ENCODE measurements at regions of chr21 and their contacts with region 1.

Region 1: DNA sequence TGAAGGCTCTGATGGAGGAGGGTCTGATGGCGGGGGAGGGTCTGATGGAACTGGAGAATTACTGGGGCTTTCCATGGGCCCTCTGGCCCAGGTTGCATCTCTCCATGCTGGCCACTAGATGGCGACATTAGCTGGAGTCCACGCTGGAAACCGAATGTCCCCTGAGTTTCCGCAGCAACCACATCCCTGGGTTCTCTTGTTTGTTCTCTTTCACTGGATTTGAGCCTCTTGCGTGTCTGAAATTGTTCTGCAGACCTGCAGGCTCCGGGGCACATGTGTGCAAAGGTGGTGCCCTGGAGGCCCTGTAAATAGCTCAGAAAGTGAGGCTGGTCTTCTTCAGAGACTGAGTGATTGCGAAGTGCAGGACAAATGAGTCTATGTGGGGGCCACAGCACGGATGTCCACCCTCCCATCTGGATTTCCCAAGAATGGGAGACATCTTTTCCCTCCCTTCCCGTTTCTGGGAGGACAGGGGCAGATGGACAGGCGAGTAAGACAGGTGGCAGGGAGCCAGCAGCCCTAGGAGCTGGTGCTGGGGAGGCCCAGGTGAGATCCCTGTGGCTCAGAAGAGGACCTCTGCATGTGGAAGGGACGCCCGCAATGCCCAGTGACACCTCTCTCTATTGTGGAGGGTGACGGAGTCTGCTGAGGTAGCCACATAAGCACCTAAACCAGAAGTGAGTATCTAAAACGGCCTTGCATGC is 73.2 kb upstream of the ABCG1 start:
- DNase-seq: peak; percentile 75
- ATAC-seq: peak; percentile 89
- H3K4me3 Mint-ChIP-seq: no peak overlapping the region
- H3K27ac Mint-ChIP-seq: no peak overlapping the region
- H3K4me1 Mint-ChIP-seq: peaks cover 8% of the 10 kb centered on the region
- H3K27me3 Mint-ChIP-seq: no peaks in the 10 kb centered on the region
- CTCF ChIP-seq: peak; percentile 91

Region 2: GRCh38 chr21:41957991-41958766 is 187.5 kb before region 1 on chr21:
- CTCF ChIA-PET with region 1: no interaction called
- POLR2A ChIA-PET with region 1: no interaction called
- intact Hi-C with region 1: no loop called
- DNase-seq: no peak
- ATAC-seq: no peak
- H3K4me3 Mint-ChIP-seq: no peak overlapping the region
- H3K27ac Mint-ChIP-seq: no peak overlapping the region
- H3K4me1 Mint-ChIP-seq: peaks cover 11% of the 10 kb centered on the region
- H3K27me3 Mint-ChIP-seq: peaks cover 19% of the 10 kb centered on the region
- CTCF ChIP-seq: no peak

Region 3: GRCh38 chr21:42156690-42157577 is 11.2 kb after region 1 on chr21:
- CTCF ChIA-PET with region 1: interaction called, 17 read pairs
- POLR2A ChIA-PET with region 1: interaction called, 3 read pairs
- intact Hi-C with region 1: no loop called
- DNase-seq: no peak
- ATAC-seq: no peak
- H3K4me3 Mint-ChIP-seq: no peak overlapping the region
- H3K27ac Mint-ChIP-seq: no peak overlapping the region
- H3K4me1 Mint-ChIP-seq: peaks cover 22% of the 10 kb centered on the region
- H3K27me3 Mint-ChIP-seq: no peaks in the 10 kb centered on the region
- CTCF ChIP-seq: no peak

Region 4: DNA sequence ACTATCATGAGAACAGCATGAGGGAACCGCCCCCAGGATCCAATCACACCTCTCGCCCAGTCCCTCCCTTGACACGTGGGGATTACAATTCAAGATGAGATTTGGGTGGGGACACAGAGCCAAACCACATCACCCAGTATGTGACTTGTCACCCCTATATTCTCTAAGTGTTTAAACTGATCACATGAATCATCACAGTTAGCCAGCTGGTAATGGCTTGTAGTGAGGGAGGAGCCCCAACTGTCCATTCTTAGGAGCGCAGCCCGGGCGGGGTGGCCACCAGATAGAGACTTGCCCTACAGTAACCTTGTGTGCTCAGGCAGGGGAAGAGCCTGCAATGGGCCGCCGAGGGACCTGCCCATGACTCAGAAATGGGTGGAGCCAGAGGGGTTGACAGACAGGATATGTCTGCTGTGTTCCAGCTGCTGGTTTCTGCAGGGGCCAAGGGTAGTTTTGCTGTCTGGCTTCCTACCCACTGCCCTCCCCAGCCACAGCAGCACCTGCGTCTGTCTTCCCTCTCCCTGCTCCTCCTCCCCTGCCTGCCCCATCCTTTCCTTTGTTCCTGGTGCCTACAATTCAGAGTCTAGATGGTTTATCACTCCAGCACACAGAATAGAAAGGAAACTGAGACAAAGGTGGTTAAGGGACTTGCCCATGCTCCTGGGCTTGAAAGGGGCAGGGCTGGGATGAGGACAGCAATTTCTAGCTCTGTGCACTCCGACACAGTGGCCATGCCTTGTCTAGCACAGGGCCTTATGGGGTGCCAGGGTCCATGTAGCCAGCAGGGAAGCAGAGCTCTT is 82.4 kb after region 1 on chr21:
- CTCF ChIA-PET with region 1: interaction called, 16 read pairs
- POLR2A ChIA-PET with region 1: no interaction called
- intact Hi-C with region 1: no loop called
- DNase-seq: peak; percentile 97
- ATAC-seq: peak; percentile 97
- H3K4me3 Mint-ChIP-seq: peak overlapping the region; percentile 53
- H3K27ac Mint-ChIP-seq: peak overlapping the region; percentile 92
- H3K4me1 Mint-ChIP-seq: peaks cover 72% of the 10 kb centered on the region
- H3K27me3 Mint-ChIP-seq: no peaks in the 10 kb centered on the region
- CTCF ChIP-seq: no peak

Region 5: DNA sequence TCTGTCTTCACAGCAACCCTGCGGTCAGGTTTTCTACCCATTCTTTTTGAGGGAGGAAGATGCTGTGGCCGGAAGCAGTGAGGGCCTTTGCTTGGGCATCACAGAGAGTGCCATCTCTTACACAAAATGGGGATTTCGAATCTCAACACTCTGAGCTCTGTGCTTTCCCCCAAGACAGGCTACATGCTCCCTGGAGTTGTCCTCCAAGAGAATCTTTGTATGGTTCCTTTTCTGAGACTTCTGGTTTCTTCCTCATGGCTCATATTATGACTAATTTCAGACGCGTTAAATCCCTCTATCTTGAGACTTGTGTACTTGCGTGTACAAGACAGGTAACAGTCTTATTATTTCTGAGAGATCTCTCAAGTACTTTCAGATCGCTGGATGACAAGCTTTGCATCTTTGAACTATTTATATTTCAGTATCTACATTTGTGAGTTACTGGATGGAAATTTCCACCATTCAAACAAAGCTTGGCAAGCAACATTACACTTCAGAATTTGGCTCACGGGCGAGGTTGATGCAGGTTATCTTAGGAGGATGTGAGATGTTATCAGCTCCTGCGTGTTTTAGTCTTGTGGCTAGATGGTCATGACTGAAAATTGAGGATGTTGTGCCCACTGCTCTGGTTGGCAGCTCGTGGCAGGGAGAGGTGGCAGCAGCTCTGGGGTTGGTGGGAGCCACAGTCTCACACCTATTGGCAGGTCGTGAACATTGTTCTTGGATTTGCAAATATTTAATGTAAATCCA is 92.6 kb after region 1 on chr21:
- CTCF ChIA-PET with region 1: interaction called, 16 read pairs
- POLR2A ChIA-PET with region 1: interaction called, 5 read pairs
- intact Hi-C with region 1: no loop called
- DNase-seq: peak; percentile 65
- ATAC-seq: no peak
- H3K4me3 Mint-ChIP-seq: peak overlapping the region; percentile 45
- H3K27ac Mint-ChIP-seq: peak overlapping the region; percentile 93
- H3K4me1 Mint-ChIP-seq: peaks cover 64% of the 10 kb centered on the region
- H3K27me3 Mint-ChIP-seq: no peaks in the 10 kb centered on the region
- CTCF ChIP-seq: no peak

Region 6: DNA sequence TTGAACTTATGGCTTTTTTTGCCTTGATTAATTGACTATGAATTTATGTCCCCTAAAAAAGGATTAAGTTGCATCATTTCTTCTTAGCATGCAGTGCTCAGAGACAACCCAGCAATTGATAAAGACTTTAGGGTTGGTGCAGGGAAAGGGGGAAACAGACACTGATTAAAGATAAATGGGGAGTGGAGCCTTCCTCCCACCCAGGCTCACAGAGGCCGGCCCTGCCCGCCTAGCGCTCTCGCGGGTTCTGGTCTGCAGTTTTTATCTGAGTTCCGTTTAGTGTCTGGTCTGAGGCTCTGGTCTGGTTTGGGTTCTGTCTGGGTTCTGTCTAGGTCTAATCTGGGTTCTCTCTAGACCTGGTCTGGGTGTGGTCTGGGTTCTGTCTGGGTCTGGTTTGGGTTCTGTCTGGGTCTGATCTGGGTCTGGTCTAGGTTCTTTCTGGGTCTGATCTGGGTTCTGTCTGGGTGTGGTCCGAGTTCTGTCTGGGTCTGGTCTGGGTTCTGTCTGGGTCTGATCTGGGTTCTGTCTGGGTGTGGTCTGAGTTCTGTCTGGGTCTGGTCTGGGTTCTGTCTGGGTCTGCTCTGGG is 121.3 kb after region 1 on chr21:
- CTCF ChIA-PET with region 1: interaction called, 10 read pairs
- POLR2A ChIA-PET with region 1: no interaction called
- intact Hi-C with region 1: no loop called
- DNase-seq: no peak
- ATAC-seq: no peak
- H3K4me3 Mint-ChIP-seq: no peak overlapping the region
- H3K27ac Mint-ChIP-seq: peak overlapping the region; percentile 55
- H3K4me1 Mint-ChIP-seq: peaks cover 28% of the 10 kb centered on the region
- H3K27me3 Mint-ChIP-seq: no peaks in the 10 kb centered on the region
- CTCF ChIP-seq: no peak

Region 7: GRCh38 chr21:42309753-42310221 is 164.1 kb after region 1 on chr21:
- CTCF ChIA-PET with region 1: interaction called, 11 read pairs
- POLR2A ChIA-PET with region 1: no interaction called
- intact Hi-C with region 1: no loop called
- DNase-seq: peak; percentile 86
- ATAC-seq: peak; percentile 93
- H3K4me3 Mint-ChIP-seq: no peak overlapping the region
- H3K27ac Mint-ChIP-seq: no peak overlapping the region
- H3K4me1 Mint-ChIP-seq: peaks cover 2% of the 10 kb centered on the region
- H3K27me3 Mint-ChIP-seq: no peaks in the 10 kb centered on the region
- CTCF ChIP-seq: peak; percentile 90

Measured in activated CD8-positive, alpha-beta T cell treated with anti-CD3 and anti-CD28 coated beads for 36 hours (primary cell).